ENCODE measurements at regions of chr15 and their contacts with region 1.

Region 1: DNA sequence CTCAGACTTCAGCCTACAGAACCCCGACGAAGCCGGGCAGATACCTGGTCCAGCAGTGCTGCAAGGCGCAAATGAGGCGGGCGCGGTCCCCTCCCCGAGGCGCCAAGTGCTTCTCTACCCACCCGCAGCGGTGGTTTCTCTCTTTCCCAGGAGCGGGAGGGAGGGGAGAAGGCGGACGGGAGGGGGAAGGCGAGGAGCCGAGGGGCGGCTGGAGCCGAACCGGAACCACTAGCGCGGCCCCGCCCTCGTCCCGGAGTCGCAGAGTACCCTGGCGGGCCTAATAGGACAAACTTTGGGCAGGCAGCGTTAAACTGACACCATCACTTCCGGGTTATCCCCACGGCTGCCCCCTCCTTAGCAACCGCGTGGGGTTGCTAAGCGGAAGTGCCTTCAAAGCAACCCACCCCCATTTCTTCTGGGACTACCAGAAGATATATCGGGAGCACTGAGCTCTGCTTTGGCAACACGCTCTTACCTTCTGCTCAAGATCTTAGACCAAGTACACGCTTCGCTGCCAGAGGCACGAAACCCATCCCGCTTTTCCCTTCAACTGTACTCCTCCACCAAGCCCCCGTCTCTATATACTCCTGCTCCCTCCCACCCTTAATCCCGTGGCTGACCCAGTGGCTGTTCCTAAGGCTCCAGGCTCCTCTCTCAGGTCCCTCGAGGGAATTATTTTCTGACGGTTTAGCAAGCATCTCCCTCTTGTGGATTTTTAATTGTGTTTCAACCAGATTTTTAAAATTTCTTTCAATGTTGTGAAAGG is at the start of gene CSNK1G1:
- ATAC-seq: peak; percentile 95 to 98 (median 97)
- H3K4me3 ChIP-seq: peak within 1 kb of the TSS; percentile 45 to 92 (median 64)
- H3K27ac ChIP-seq: peak within 1 kb of the TSS; percentile 42 to 79
- H3K4me1 ChIP-seq: peaks cover 0 to 7% of the 10 kb centered on the region in 2 donors
- total RNA-seq, gene CSNK1G1: 12.3 to 30.8 (median 25.4) TPM

Region 2: GRCh38 chr15:64209680-64210334 is 146.3 kb before region 1 on chr15:
- in situ Hi-C with region 1: loop called in 3 of 9 experiments (anchors 10 to 25 kb)
- ATAC-seq: peak in 3 of 8 experiments; percentile 25 to 68 (median 39)
- H3K4me3 ChIP-seq: no peak overlapping the region
- H3K27ac ChIP-seq: no peak overlapping the region
- H3K4me1 ChIP-seq: no peaks in the 10 kb centered on the region

Measured in motor neuron (in vitro differentiated cells).